MCF 10A (cell line): ENCODE measurements at regions of chr10 and their contacts with region 1.

Region 1: DNA sequence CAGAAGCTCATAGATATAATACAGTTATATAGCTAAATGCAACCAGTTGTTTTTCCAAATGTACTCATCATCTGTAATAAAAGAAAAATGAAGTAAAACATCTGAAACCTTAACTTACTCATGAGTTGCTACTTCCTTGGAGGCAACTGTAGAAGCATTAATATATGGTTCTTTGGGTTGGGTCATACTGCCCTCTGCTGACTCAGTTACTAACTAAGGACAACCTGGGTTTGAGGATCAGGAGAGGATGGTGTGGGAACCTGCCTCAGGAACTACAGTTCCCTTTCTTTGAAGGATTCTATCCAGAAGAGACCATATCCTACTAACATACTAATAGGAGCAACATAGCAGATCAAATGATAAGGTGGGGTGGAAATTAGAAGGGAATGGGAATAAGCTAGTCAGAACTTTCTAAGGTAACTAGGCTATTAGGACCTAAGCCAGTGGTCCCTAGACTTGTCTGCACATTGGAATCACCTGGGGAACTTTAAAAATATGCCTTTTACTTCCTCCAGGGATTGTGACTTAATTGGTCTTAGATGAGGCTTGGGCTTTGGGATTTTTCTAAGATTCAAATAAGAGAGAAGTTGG is 20.7 kb downstream of the COX15 start:
- DNase-seq: peak; percentile 65
- H3K4me3 Mint-ChIP-seq: no peak overlapping the region
- H3K27ac Mint-ChIP-seq: peak overlapping the region; percentile 2
- H3K4me1 Mint-ChIP-seq: peaks cover 8% of the 10 kb centered on the region
- H3K27me3 Mint-ChIP-seq: no peaks in the 10 kb centered on the region
- CTCF ChIP-seq: peak; percentile 53

Region 2: DNA sequence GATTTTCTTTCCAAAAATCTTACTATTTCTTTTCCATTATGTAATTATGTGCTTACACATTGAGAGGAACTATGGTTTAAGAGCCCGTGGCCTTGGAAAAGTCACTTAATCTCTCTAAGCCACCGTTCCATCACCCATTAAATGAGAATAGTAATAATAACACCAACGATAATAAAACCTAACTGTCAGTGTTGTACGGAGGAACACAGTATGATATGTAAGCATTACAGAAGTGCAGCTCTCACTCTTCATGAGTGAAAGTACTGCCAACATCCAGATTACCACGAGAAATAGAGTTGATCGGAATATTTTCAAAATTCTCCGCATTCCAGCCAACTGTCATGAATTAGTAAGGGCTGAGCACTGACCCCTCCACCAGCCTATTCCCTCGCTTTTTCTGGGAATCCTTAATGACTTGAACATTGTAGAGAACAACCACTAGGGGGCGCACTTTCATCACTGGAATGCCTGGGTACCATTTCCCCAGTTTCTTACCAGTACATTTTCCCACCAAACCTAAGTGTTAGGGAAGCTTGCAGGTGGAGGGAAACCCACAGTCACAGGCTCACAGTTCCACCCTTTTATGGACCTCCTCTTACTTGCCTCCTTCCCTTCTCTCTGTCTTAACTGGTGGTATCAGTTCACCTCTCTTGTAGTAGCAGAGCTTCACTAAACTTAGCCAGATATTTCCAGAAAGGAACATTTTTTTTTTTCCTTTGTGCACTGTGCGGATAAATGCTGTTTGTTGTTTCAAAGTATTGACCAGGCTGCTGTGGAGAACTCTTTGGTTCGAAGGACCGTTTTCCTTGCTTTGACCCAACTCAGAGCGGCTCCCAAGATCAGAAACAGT is 150.7 kb before region 1 on chr10:
- CTCF ChIA-PET with region 1: interaction called, 3 read pairs
- POLR2A ChIA-PET with region 1: no interaction called
- intact Hi-C with region 1: loop called (anchors 1 kb)
- DNase-seq: peak; percentile 79
- H3K4me3 Mint-ChIP-seq: no peak overlapping the region
- H3K27ac Mint-ChIP-seq: no peak overlapping the region
- H3K4me1 Mint-ChIP-seq: no peaks in the 10 kb centered on the region
- H3K27me3 Mint-ChIP-seq: peaks cover under 1% of the 10 kb centered on the region
- CTCF ChIP-seq: peak; percentile 79

Region 3: GRCh38 chr10:99620713-99621453 is 90.3 kb before region 1 on chr10:
- CTCF ChIA-PET with region 1: interaction called, 15 read pairs
- POLR2A ChIA-PET with region 1: interaction called, 14 read pairs
- intact Hi-C with region 1: no loop called
- DNase-seq: peak; percentile 95
- H3K4me3 Mint-ChIP-seq: peak overlapping the region; percentile 78
- H3K27ac Mint-ChIP-seq: peak overlapping the region; percentile 98
- H3K4me1 Mint-ChIP-seq: peaks cover 32% of the 10 kb centered on the region
- H3K27me3 Mint-ChIP-seq: no peaks in the 10 kb centered on the region
- CTCF ChIP-seq: no peak

Region 4: DNA sequence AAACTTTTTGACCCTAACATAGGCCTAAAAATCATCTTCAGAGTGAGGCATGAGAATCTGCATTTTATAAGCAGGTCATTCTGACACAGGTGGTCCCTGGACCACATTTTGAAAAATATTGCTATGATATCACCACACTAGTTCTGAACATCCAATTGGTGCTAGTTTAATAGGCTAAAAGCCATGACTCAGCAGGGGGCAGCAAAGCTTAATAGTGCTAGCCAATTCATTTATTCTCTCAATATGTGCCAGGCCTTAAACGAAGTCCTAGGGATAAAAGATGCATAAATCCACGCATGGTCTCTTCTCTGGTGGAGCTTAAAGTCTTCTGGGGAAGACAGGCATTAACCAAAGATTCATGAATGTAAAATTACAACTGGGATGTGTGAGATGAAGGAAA is 80.8 kb before region 1 on chr10:
- CTCF ChIA-PET with region 1: interaction called, 60 read pairs
- POLR2A ChIA-PET with region 1: interaction called, 5 read pairs
- intact Hi-C with region 1: loop called (anchors 1 kb)
- DNase-seq: peak; percentile 73
- H3K4me3 Mint-ChIP-seq: no peak overlapping the region
- H3K27ac Mint-ChIP-seq: no peak overlapping the region
- H3K4me1 Mint-ChIP-seq: peaks cover 6% of the 10 kb centered on the region
- H3K27me3 Mint-ChIP-seq: no peaks in the 10 kb centered on the region
- CTCF ChIP-seq: peak; percentile 63